ENCODE measurements at regions of chr17 and their contacts with region 1.

Region 1: GRCh38 chr17:57892146-57892828 is 42.4 kb upstream of the MRPS23 start:
- DNase-seq: peak; percentile 92
- ATAC-seq: peak; percentile 66 to 84
- H3K4me3 ChIP-seq: no peak overlapping the region
- H3K27ac ChIP-seq: peak overlapping the region; percentile 92 to 96
- H3K4me1 ChIP-seq: peaks cover 81% of the 10 kb centered on the region
- CTCF ChIP-seq: peak; percentile 97
- EP300 ChIP-seq: no peak
- POLR2A ChIP-seq: no peak
- RAD21 ChIP-seq: peak; percentile 95 to 96

Region 2: GRCh38 chr17:57875309-57876115 is 16.8 kb before region 1 on chr17:
- CTCF ChIA-PET with region 1: interaction called, 859 read pairs
- POLR2A ChIA-PET with region 1: interaction called, 10 read pairs
- DNase-seq: peak; percentile 96 to 98
- ATAC-seq: peak; percentile 83 to 88
- H3K4me3 ChIP-seq: peak overlapping the region; percentile 7; the same call in 1 of the 3 replicates
- H3K27ac ChIP-seq: peak overlapping the region; percentile 92 to 95
- H3K4me1 ChIP-seq: peaks cover 95% of the 10 kb centered on the region
- CTCF ChIP-seq: peak; percentile 54; the same call in 2 of the 3 replicates
- EP300 ChIP-seq: peak; percentile 73 to 92; a peak in 3 of 5 replicates
- POLR2A ChIP-seq: no peak
- RAD21 ChIP-seq: peak; percentile 72 to 86

Region 3: GRCh38 chr17:57910462-57911420 is 18.5 kb after region 1 on chr17:
- CTCF ChIA-PET with region 1: interaction called, 859 read pairs
- POLR2A ChIA-PET with region 1: interaction called, 3 read pairs
- DNase-seq: no peak
- ATAC-seq: no peak
- H3K4me3 ChIP-seq: no peak overlapping the region
- H3K27ac ChIP-seq: peak overlapping the region in 1 of 2 experiments; percentile 74; a peak in 2 of 6 replicates
- H3K4me1 ChIP-seq: peaks cover 61% of the 10 kb centered on the region
- CTCF ChIP-seq: no peak
- EP300 ChIP-seq: no peak
- POLR2A ChIP-seq: no peak
- RAD21 ChIP-seq: no peak

Region 4: DNA sequence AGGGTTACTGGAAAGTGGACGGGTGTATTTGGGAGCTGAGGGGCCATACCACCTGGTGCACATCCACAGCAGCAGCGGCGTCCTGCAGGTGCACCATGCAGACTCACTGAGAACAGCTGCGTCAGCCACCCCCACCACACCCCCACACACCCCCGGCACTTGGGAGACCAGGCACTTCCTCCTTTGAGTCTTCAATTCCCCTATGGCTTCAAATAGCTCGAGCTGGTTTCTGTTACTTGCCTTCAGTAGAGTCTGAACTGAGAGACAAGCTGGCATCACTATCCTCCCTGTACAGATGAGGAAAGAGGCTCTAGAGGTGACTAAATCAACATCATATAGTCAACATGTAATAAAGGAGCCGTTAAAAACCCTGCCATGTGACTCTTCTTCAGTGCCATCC is 47.5 kb after region 1 on chr17:
- CTCF ChIA-PET with region 1: interaction called, 11 read pairs
- POLR2A ChIA-PET with region 1: no interaction called
- DNase-seq: no peak
- ATAC-seq: no peak
- H3K4me3 ChIP-seq: no peak overlapping the region
- H3K27ac ChIP-seq: peak overlapping the region; percentile 55 to 87
- H3K4me1 ChIP-seq: peaks cover 94% of the 10 kb centered on the region
- CTCF ChIP-seq: no peak
- EP300 ChIP-seq: no peak
- POLR2A ChIP-seq: no peak
- RAD21 ChIP-seq: no peak

Region 5: GRCh38 chr17:57970706-57971105 is 78.4 kb after region 1 on chr17:
- CTCF ChIA-PET with region 1: interaction called, 14 read pairs
- POLR2A ChIA-PET with region 1: interaction called, 4 read pairs
- DNase-seq: no peak
- ATAC-seq: peak in 1 of 2 experiments; percentile 9; a peak in 1 of 6 replicates
- H3K4me3 ChIP-seq: no peak overlapping the region
- H3K27ac ChIP-seq: peak overlapping the region in 1 of 2 experiments; percentile 50; a peak in 4 of 6 replicates
- H3K4me1 ChIP-seq: peaks cover 36% of the 10 kb centered on the region
- CTCF ChIP-seq: no peak
- EP300 ChIP-seq: no peak
- POLR2A ChIP-seq: no peak
- RAD21 ChIP-seq: no peak

Region 6: DNA sequence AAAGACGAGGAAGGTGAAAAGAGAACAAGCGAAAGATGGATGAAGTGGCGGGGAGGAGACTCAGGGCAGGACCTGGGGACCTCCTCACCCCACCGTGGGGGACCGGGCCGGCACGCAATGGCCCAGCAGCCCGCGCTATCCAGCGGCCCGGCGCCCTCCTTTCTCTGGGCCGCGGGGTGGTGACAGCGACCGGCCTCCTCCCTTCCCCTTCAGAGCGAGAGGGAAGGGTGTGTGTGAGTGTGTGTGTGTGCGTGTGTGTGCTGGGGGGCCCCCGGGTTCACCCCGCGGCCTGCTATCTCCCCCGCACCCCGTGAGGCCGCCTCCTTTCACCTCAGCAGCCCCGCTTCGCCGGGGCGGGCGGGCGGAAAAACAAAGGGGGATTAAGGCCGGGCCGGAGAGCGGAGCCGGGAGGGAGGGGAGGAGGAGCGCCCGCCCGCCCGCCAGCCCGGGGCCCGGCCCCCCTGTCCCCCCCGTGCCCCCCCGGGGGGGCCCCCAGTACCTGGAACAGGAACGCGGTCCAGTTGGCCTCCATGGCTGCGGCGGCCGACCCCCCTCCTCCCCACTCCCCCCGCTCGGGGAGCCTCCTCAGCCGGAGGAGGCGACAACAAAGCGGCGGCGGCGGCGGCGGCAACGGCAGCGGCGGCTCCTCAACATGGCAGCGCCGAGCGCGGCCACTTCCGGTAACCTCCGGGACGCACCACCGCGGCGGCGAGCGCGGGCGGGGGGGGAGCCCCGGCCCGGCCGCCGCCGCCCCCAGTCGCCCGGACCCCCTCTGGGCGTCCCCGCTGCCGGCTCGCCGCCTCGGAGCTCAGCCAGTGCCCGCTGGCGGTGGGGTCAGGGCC is 95.5 kb after region 1 on chr17 and contains the start of gene VEZF1:
- CTCF ChIA-PET with region 1: interaction called, 1,377 read pairs
- POLR2A ChIA-PET with region 1: interaction called, 9 read pairs
- DNase-seq: peak; percentile 76 to 85
- ATAC-seq: peak; percentile 65 to 70
- H3K4me3 ChIP-seq: peak within 1 kb of the TSS; percentile 77
- H3K27ac ChIP-seq: peak within 1 kb of the TSS; percentile 96 to 98
- H3K4me1 ChIP-seq: peaks cover 75% of the 10 kb centered on the region
- CTCF ChIP-seq: no peak
- EP300 ChIP-seq: no peak
- POLR2A ChIP-seq: peak; percentile 18; the same call in 1 of the 2 replicates
- RAD21 ChIP-seq: 0 out of 5 replicates have a peak, but pooled peaks of 1 of the 2 experiments have one; percentile 9
- polyA plus RNA-seq, gene VEZF1: 57.7 and 63.8 TPM in 2 replicates

Region 7: GRCh38 chr17:58032691-58033415 is 140.6 kb after region 1 on chr17:
- CTCF ChIA-PET with region 1: no interaction called
- POLR2A ChIA-PET with region 1: no interaction called
- DNase-seq: no peak
- ATAC-seq: no peak
- H3K4me3 ChIP-seq: no peak overlapping the region
- H3K27ac ChIP-seq: no peak overlapping the region
- H3K4me1 ChIP-seq: no peaks in the 10 kb centered on the region
- CTCF ChIP-seq: no peak
- EP300 ChIP-seq: no peak
- POLR2A ChIP-seq: no peak
- RAD21 ChIP-seq: no peak